ENCODE measurements at regions of chr14 and their contacts with region 1.

Region 1: GRCh38 chr14:80954687-80955299 is 628 bp upstream of the TSHR start:
- DNase-seq: peak; percentile 79
- ATAC-seq: peak; percentile 94 to 96

Region 2: DNA sequence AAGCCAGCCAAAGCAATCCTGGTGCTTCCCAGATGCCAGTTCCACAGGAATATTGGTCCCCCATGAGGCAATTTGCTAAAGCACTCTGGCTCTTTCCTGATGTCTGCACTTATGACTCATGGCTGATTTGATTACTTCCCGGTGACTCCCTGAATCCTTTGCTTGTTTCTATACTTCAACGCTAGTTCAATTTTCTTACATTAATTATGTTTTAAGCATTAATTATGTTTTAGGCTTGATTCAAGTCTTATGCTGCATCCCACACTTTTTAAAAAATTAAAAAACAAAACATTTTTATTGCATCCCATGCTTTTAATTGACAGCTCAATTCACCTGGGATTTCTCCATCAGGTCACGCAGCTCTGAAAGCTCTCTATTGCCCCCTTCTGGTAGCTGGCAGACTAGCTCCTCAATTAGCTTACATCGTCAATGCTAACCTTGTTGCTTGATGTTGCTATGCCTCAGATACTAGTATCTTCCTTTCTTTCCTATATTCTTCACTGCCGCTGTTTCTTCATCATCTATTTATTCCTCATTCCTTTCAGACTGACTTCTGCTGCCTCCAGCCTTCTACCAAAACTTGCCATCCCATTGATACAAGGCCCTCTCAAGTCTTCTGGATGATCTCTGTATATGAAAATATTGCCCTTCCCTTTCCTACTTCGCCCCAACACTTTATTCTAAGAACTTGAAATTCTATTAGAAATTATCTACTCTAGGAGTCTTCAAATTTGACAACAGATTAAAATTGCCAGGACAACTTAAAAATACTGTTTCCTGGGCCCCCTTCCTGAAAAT is 32.6 kb after region 1 on chr14:
- intact Hi-C with region 1: loop called in 1 of 2 experiments (anchors 1 kb)
- DNase-seq: peak; percentile 57
- ATAC-seq: peak; percentile 44 to 81

Region 3: DNA sequence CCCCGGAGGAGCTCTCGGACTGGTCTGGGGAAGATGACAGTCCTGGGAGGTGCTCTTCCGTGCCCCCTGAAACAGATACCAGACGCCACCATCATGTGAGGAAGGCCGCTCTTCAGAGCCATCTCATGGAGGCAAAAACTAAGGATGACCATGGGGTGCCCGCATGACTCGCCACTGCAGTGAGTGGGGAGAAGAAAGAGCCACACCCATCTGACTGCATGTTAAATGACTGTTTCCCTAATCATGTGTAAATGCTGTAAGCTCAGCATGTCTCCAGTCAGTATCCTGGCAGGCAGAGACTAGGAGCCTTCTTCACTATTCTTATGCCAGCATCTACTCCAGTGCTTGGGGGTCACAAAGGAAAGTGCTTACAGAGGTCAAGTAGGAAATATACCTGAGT is 441.3 kb after region 1 on chr14:
- intact Hi-C with region 1: no loop called
- DNase-seq: no peak
- ATAC-seq: no peak

Region 4: GRCh38 chr14:81453166-81453766 is 498.5 kb after region 1 on chr14:
- intact Hi-C with region 1: loop called in 1 of 2 experiments (anchors 10 kb)
- DNase-seq: peak; percentile 35
- ATAC-seq: peak; percentile 33 to 39

Measured in left cardiac atrium (tissue), 4 donors.